ENCODE measurements at regions of chr15 and their contacts with region 1.

Region 1: DNA sequence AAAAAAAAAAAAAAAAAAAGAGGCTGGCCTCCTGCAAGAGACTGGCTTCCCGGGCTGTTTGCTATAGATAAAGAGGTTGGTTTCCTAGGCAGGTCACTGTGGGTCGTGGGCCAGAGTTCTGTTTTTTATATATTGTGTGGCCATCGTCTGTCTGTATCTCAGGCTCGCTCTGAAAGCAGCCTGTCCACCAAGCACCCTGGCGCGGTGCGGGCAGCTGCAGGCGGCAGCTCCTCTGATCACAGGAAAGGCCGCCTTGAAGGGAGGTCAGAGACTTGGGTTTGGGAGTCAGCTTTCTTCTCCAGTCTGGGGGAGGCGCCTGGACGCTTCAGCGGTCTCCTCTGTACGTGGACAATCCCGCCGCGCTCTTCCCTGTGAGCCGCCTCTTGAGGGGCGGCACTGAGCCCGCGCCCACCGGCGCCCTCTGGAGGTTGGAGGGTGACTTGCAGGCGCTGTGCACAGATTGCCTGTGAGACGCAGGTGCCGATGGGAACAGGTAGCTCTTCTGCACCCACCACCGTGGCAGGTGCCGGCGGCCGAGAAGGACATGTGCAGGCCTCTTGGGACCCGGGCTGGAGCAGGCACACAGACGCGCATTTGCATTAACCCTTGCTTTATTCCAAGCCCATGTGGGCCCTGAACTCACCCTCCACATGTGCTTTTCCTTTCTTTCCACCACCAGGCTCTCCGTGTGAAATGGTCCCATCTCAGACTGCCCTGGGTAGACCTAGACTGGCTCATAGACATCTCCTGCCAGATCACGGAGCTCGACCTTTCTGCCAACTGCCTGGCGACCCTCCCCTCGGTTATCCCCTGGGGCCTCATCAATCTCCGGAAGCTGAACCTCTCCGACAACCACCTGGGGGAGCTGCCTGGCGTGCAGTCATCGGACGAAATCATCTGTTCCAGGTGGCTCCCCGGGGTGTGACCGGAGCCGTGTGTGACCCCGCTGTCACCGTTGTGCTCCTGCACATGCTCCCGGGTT is 89.3 kb downstream of the LRRK1 start:
- DNase-seq: peak; percentile 61 to 99
- H3K4me3 ChIP-seq: peak overlapping the region; percentile 32 to 61 (median 54)
- H3K27ac ChIP-seq: no peak overlapping the region
- H3K4me1 ChIP-seq: peaks cover 0 to 4% (median 0%) of the 10 kb centered on the region in 4 experiments; a peak in 2 of 7 replicates
- H3K27me3 ChIP-seq: peaks cover 0 to 6% (median 0%) of the 10 kb centered on the region in 4 experiments; a peak in 3 of 7 replicates
- CTCF ChIP-seq: peak; percentile 96 to 98 (median 97)
- EP300 ChIP-seq: no peak
- POLR2A ChIP-seq: no peak
- RAD21 ChIP-seq: peak; percentile 48 to 67

Region 2: DNA sequence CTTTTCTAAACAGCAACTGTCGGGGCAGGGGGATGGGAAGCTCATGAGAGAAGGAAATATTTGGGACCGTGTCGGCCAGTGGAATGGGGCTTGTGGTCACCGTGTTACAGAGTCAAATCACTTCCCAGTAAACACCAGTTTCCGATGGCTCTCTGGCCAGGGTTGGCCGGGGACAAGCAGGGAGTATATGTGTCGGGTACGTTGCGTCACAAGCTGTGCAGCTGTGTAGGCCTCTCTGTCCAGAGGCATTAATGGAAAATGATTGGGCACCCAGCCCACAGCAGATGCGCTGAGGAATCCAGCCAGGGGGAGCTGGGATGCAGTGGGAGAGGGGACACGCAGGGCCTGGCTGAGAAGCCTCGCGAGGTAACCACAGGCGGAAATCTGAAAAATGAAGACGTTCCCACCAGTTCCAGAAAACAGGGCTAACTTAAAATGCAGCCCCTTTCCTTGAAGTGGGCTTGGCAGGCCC is 144.6 kb before region 1 on chr15:
- CTCF ChIA-PET with region 1: interaction called, 19 read pairs
- POLR2A ChIA-PET with region 1: no interaction called
- DNase-seq: no peak
- H3K4me3 ChIP-seq: no peak overlapping the region
- H3K27ac ChIP-seq: no peak overlapping the region
- H3K4me1 ChIP-seq: no peaks in the 10 kb centered on the region
- H3K27me3 ChIP-seq: no peaks in the 10 kb centered on the region
- CTCF ChIP-seq: no peak
- EP300 ChIP-seq: no peak
- POLR2A ChIP-seq: no peak
- RAD21 ChIP-seq: no peak

Region 3: GRCh38 chr15:100902436-100903167 is 105.8 kb before region 1 on chr15:
- CTCF ChIA-PET with region 1: interaction called, 17 read pairs
- POLR2A ChIA-PET with region 1: no interaction called
- DNase-seq: no peak
- H3K4me3 ChIP-seq: no peak overlapping the region
- H3K27ac ChIP-seq: no peak overlapping the region
- H3K4me1 ChIP-seq: peaks cover 0 to 10% (median 3%) of the 10 kb centered on the region in 4 experiments; a peak in 5 of 7 replicates
- H3K27me3 ChIP-seq: no peaks in the 10 kb centered on the region
- CTCF ChIP-seq: no peak
- EP300 ChIP-seq: no peak
- POLR2A ChIP-seq: no peak
- RAD21 ChIP-seq: no peak

Region 4: GRCh38 chr15:100934726-100935125 is 73.7 kb before region 1 on chr15:
- CTCF ChIA-PET with region 1: interaction called, 39 read pairs
- POLR2A ChIA-PET with region 1: interaction called, 3 read pairs
- DNase-seq: peak in 1 of 2 experiments; percentile 41
- H3K4me3 ChIP-seq: no peak overlapping the region
- H3K27ac ChIP-seq: no peak overlapping the region
- H3K4me1 ChIP-seq: peaks cover 0 to 5% (median 3%) of the 10 kb centered on the region in 4 experiments; a peak in 4 of 7 replicates
- H3K27me3 ChIP-seq: no peaks in the 10 kb centered on the region
- CTCF ChIP-seq: peak in 2 of 3 experiments; percentile 33 to 38; a peak in 3 of 4 replicates
- EP300 ChIP-seq: no peak
- POLR2A ChIP-seq: no peak
- RAD21 ChIP-seq: peak; percentile 19 to 38; a peak in 3 of 4 replicates

Region 5: GRCh38 chr15:101024073-101024695 is 15.7 kb after region 1 on chr15:
- CTCF ChIA-PET with region 1: interaction called, 79 read pairs
- POLR2A ChIA-PET with region 1: no interaction called
- DNase-seq: no peak
- H3K4me3 ChIP-seq: no peak overlapping the region
- H3K27ac ChIP-seq: no peak overlapping the region
- H3K4me1 ChIP-seq: no peaks in the 10 kb centered on the region; a peak in 1 of 7 replicates
- H3K27me3 ChIP-seq: no peaks in the 10 kb centered on the region
- CTCF ChIP-seq: no peak
- EP300 ChIP-seq: no peak
- POLR2A ChIP-seq: no peak
- RAD21 ChIP-seq: no peak

Region 6: DNA sequence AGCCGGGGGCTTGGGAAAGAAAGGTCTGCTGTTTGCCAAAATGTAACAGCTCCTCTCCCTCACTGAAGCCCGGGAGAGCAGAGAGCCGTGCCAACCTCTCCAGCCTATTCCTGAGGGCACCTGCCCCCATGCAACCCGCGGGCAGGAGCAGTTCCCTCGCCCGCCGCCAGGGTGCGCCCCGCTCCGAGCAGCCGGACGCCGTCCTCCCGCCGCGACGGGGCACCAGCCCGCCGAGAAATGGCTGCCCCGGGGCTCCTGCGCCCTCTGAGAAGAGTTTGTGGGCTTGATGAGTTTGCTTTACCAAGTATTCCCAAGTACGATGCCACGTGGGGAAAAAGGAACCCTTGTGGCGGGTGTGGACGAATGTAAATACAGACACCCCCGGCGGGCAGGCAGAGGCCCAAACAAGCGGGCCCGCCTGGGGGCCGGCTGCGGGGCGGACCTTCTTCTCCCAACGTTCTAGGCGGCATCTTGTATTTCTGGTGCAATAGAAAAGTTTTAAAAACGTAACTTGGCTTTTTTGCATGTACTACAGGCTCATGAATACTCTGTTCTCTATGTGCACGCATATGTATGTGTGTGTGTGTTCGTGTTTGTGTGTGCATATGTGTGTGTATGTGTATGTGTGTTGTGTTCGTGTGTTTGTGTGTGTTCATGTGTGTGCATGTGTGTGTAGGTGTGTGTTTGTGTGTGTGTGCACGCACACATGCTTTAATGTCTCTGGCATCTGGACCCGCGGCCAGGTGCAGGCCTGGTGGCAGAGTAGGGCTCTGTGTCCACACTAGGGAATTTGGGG is 80.5 kb after region 1 on chr15:
- CTCF ChIA-PET with region 1: interaction called, 72 read pairs
- POLR2A ChIA-PET with region 1: no interaction called
- DNase-seq: peak; percentile 34 to 98
- H3K4me3 ChIP-seq: no peak overlapping the region
- H3K27ac ChIP-seq: no peak overlapping the region
- H3K4me1 ChIP-seq: peaks cover 0 to 1% (median 0%) of the 10 kb centered on the region in 4 experiments; a peak in 3 of 7 replicates
- H3K27me3 ChIP-seq: no peaks in the 10 kb centered on the region
- CTCF ChIP-seq: peak; percentile 89 to 95 (median 89)
- EP300 ChIP-seq: 0 out of 3 replicates have a peak, but pooled peaks of 1 of the 2 experiments have one; percentile 37
- POLR2A ChIP-seq: no peak
- RAD21 ChIP-seq: peak; percentile 81 to 91

Region 7: DNA sequence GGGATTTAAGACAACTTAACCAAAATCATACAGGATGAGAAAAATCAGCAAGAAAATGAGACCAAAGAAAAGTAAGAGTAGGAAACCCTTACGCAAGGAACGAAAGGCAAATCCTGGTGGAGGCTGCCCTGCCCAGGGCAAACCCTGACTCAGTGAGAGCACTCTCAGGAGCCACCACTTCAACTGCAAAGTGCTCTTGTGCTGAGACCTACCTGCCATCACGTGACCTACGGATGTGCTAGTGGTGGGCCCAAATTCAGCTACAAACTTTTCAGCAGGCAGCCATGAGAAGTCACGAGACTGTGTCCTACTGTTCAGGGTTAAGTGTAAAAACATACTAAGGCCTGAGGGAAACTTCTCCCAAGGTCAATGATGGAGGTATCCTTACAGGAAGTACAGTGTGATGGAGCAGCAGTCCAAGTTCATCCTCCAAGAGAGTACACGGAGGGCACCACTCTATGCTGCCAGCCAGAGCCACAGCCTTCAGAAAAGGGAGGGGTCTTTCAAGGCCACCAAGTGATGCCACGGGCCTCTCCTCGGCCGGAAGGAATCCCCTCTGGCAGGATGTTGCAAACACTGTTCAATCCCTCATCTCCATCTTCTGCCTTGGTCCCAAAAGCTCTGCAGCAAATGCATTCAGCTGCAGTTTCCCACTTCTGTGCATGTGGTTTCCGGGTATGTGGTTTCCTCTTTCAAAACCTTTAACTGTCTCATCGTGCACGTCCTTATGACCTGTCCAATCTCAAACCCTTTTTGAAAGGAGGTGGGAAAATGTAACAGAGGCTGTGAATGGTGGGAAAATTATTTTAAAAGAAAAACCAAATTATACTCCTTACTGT is 233.9 kb after region 1 on chr15:
- CTCF ChIA-PET with region 1: interaction called, 13 read pairs
- POLR2A ChIA-PET with region 1: no interaction called
- DNase-seq: no peak
- H3K4me3 ChIP-seq: no peak overlapping the region; a peak in 1 of 8 replicates
- H3K27ac ChIP-seq: no peak overlapping the region
- H3K4me1 ChIP-seq: peaks cover 3 to 23% (median 11%) of the 10 kb centered on the region in 4 experiments; a peak in 5 of 7 replicates
- H3K27me3 ChIP-seq: no peaks in the 10 kb centered on the region
- CTCF ChIP-seq: no peak
- EP300 ChIP-seq: no peak
- POLR2A ChIP-seq: no peak
- RAD21 ChIP-seq: no peak

Region 8: DNA sequence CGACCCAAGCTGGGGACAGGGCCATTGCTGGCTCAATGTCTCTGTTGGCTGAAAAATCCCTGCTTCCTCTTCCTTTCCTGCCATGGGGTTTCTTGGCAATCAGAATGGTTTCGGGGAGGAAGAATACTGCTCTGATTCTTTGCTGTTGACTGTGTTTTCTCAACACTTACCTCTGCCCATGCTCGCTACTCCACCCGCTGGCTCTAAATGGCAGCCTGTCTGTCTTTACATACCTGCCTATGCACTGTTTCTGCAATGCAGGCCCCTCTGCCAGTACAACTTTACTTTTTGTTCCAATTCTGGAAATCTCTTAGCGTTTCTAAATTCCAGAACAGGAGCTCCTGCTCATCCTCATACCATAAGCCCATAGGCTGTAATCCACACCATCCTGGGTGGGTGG is 325.0 kb after region 1 on chr15:
- CTCF ChIA-PET with region 1: no interaction called
- POLR2A ChIA-PET with region 1: no interaction called
- DNase-seq: no peak
- H3K4me3 ChIP-seq: no peak overlapping the region
- H3K27ac ChIP-seq: no peak overlapping the region
- H3K4me1 ChIP-seq: no peaks in the 10 kb centered on the region; a peak in 1 of 7 replicates
- H3K27me3 ChIP-seq: peaks cover 0 to 19% (median 6%) of the 10 kb centered on the region in 4 experiments; a peak in 4 of 7 replicates
- CTCF ChIP-seq: peak in 1 of 3 experiments; percentile 14; a peak in 1 of 4 replicates
- EP300 ChIP-seq: no peak
- POLR2A ChIP-seq: no peak
- RAD21 ChIP-seq: no peak

Region 9: DNA sequence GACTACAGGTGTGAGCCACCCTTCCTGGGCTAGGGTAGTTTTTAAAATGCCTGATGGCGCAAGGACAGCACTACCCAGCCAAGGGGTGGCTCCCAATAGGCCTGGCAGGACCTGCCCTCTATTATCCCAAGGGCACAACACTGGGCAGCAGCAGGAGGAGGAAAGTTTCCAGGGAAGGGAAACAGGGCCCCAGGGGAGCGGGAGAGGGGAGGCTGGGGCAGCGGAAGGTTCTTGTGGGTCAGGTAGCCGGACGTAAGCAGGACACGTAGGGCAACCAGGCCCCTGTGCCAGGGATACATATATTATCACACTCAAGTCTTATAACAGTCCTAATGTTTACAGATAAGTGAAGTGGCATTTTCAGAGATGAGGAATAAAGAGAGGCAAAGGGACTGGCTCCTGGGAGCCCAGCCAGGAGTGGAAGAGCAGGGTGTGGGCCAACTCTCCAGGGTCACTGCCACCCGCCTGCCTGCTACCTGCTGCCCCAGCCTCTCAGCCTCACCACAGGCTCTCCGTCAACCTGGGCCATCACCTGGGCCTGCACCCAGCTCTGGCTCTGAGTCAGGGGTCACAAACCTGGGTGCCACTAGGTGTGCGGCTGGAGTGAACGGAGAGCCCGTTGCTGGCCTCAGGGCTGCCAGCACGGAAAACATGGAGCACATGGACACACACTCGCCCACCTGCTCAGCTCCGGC is 359.8 kb after region 1 on chr15:
- CTCF ChIA-PET with region 1: no interaction called
- POLR2A ChIA-PET with region 1: no interaction called
- DNase-seq: peak in 1 of 2 experiments; percentile 41
- H3K4me3 ChIP-seq: no peak overlapping the region
- H3K27ac ChIP-seq: no peak overlapping the region
- H3K4me1 ChIP-seq: peaks cover 0 to 16% (median 10%) of the 10 kb centered on the region in 4 experiments; a peak in 6 of 7 replicates
- H3K27me3 ChIP-seq: no peaks in the 10 kb centered on the region; a peak in 3 of 7 replicates
- CTCF ChIP-seq: no peak
- EP300 ChIP-seq: no peak
- POLR2A ChIP-seq: no peak
- RAD21 ChIP-seq: no peak